ENCODE measurements at regions of chr6 and their contacts with region 1.

Region 1: DNA sequence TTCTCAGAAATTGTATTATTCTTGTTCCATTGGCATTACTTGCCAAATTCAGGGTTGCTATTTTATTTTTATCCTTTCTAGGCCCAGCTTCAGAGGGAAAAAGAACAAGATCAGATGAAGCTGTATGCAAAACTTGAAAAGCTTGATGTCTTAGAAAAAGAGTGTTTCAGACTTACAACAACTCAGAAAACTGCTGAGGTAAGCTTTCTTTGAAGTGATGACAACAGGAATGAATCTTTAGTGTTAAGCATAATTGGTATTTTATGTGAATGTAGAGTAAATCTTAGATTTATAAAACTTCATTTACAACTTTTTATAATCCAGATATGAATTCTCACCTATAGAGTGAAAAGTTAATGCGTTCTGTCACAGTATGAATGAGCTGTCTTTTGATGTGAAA is 58.4 kb downstream of the CEP57L1 start:
- DNase-seq: no peak
- H3K4me3 ChIP-seq: no peak overlapping the region
- H3K27ac ChIP-seq: no peak overlapping the region
- H3K4me1 ChIP-seq: no peaks in the 10 kb centered on the region
- H3K27me3 ChIP-seq: no peaks in the 10 kb centered on the region
- CTCF ChIP-seq: no peak

Region 2: DNA sequence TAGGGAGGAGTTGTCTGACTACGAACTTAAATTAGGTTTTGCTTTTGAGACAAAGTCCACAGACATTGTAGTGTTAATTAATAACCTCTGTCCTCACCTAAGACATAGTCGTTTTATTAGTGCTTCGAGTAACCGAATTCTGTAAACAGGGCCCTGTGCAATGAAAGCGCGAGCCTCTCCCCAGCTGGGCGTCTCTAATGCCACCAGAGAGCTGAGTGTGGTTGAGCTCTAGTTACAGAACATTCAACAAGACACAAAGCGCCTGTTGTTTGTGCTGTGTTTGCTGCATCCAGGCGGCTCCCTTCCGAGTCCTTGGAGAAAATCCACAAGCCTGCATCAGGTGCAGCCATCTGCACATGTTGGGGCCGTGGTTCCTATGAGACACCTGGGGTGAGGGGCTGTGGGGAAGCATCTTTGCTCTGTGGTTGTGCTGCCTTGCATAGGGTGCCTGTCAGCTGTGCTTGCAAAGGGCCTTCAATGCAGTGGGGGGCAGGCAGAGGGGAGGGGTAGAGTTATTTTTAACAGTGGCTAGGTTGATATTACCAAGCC is 164.7 kb after region 1 on chr6:
- CTCF ChIA-PET with region 1: no interaction called
- POLR2A ChIA-PET with region 1: no interaction called
- intact Hi-C with region 1: no loop called
- DNase-seq: no peak
- H3K4me3 ChIP-seq: no peak overlapping the region
- H3K27ac ChIP-seq: no peak overlapping the region
- H3K4me1 ChIP-seq: no peaks in the 10 kb centered on the region
- H3K27me3 ChIP-seq: no peaks in the 10 kb centered on the region
- CTCF ChIP-seq: no peak

Region 3: DNA sequence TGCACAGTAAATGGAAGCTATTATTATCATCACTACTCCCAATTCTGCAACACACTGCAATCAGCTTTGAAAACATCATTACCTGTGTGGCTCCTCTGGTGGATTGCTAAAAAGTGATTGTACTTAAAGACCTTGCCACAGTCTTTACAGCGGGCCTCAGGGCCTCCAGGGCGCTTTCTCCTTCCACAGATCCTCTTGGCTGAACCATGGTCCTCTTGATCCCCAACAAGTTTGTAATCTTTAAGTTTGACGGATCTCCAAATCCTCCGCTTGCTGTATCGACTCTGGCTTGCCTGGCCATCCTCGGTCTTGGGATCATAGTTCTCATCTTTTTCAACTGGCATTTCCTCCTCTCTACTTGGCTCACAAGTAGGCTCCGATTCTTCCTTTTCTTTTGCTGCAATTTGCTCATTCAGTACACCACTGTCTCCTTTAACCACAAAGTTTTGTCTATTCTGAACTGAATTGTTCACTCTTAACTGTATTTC is 327.3 kb after region 1 on chr6:
- CTCF ChIA-PET with region 1: no interaction called
- POLR2A ChIA-PET with region 1: interaction called, 11 read pairs
- intact Hi-C with region 1: no loop called
- DNase-seq: no peak
- H3K4me3 ChIP-seq: no peak overlapping the region
- H3K27ac ChIP-seq: no peak overlapping the region
- H3K4me1 ChIP-seq: peaks cover 19% of the 10 kb centered on the region
- H3K27me3 ChIP-seq: no peaks in the 10 kb centered on the region
- CTCF ChIP-seq: no peak

Region 4: GRCh38 chr6:109705258-109705657 is 551.5 kb after region 1 on chr6:
- CTCF ChIA-PET with region 1: no interaction called
- POLR2A ChIA-PET with region 1: no interaction called
- intact Hi-C with region 1: no loop called
- DNase-seq: peak; percentile 92
- H3K4me3 ChIP-seq: no peak overlapping the region
- H3K27ac ChIP-seq: no peak overlapping the region
- H3K4me1 ChIP-seq: peaks cover 4% of the 10 kb centered on the region
- H3K27me3 ChIP-seq: no peaks in the 10 kb centered on the region
- CTCF ChIP-seq: peak; percentile 99